Heart left ventricle (tissue), 16 donors: ENCODE measurements at regions of chr5 and their contacts with region 1.

Region 1: DNA sequence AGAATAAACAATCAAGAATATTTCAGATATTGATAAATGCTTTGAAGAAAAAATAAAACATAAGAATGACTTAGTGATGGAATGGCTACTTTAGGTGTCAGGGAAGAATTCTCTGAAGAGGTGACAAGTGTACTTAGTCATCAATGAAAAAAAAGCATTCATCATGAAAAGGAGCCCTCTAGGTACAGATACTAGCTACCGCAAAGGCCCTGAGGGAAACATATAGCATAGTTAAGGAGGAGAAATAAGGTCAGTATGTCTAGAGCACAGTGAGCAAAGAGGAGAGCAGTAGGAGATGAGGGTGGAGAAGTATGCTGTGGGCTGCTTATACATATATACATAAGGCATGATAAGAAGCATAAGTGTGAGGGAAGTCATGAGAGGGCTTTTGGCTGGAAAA is 41.8 kb downstream of the CSF2 start:
- DNase-seq: no peak
- ATAC-seq: no peak
- H3K4me3 ChIP-seq: no peak overlapping the region
- H3K27ac ChIP-seq: no peak overlapping the region
- H3K4me1 ChIP-seq: peaks cover 0 to 17% (median 0%) of the 10 kb centered on the region in 12 donors
- H3K27me3 ChIP-seq: no peaks in the 10 kb centered on the region
- CTCF ChIP-seq: no peak
- POLR2A ChIP-seq: no peak

Region 2: GRCh38 chr5:131899692-131900091 is 215.7 kb before region 1 on chr5:
- intact Hi-C with region 1: loop called in 1 of 10 experiments (anchors 5 kb)
- DNase-seq: no peak
- ATAC-seq: no peak
- H3K4me3 ChIP-seq: no peak overlapping the region
- H3K27ac ChIP-seq: no peak overlapping the region
- H3K4me1 ChIP-seq: no peaks in the 10 kb centered on the region
- H3K27me3 ChIP-seq: peaks cover 0 to 11% (median 0%) of the 10 kb centered on the region in 9 donors
- CTCF ChIP-seq: no peak
- POLR2A ChIP-seq: no peak